PC-9 (cell line): ENCODE measurements at regions of chr6 and their contacts with region 1.

Region 1: DNA sequence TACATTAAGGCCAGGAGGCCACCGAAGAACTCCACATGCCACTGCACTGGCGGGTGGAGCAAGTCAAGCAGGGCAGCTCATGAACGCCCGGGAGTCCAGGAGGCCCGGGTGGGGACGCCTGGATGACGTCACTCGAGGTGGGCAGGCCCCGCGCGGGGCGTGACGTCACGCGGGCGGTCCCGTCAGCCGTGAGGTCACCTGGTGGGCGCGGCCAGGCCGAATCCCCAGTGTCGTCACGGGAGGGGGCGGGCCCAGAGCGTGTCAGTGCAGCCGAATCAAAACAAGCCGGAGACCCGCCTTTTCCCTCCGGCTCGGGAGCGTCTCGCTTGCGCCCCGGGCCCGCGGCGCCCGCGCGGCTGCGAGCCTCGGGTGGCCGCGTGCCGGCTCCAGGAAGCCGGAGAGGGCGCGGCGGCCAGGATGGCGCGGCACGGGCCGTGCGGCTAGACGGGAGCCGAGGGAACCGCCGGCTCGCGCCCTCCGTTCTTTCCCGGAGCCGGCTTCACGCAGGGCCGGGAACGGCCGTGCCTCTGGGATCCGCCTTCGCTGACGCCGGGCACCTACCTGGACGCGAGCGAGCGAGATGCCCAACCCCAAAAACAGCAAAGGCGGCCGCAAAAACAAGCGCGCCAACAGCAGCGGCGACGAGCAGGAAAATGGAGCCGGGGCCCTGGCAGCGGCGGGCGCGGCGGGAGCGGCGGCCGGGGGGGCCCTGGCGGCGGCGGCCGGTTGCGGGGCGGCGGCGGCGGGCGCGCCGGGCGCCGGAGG is at the start of gene HECA:
- DNase-seq: peak; percentile 87 to 93
- H3K4me3 ChIP-seq: peak within 1 kb of the TSS; percentile 76
- H3K27ac ChIP-seq: no peak within 1 kb of the TSS
- H3K4me1 ChIP-seq: peaks cover 11% of the 10 kb centered on the region
- H3K27me3 ChIP-seq: no peaks in the 10 kb centered on the region
- CTCF ChIP-seq: no peak
- total RNA-seq, gene HECA: 11.6 and 12.9 TPM in 2 replicates

Region 2: DNA sequence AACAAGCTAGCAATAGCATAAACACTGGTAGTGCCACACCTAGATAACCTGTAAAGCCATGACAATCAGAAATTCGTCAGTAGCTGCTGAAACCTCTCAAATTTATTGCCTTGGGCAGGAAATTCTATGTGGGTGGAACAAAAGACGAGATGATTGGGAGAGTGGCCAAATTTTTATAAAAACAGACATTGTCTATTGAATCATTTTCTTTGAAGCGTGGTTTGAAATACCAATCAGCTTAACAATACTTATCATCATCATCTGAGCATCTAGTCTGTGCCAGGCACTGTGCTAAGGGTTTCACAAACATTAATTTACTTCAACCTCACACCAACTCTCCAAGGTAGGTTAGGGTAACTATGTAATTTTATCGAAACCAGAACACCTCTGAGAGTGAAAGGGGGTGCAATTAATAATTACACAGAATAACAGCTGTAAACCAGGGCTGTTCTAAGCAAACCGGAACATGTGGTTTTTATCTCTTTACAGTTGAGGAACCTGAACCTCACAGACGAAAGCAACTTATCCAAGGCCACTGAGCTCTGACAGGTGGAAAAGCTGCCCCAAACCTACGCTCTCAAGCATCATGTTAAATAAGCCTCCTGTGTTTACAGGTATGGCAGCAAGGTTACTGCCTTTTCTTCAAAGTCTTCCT is 679.1 kb before region 1 on chr6:
- CTCF ChIA-PET with region 1: interaction called, 22 read pairs
- POLR2A ChIA-PET with region 1: no interaction called
- intact Hi-C with region 1: no loop called
- DNase-seq: peak; percentile 17 to 82
- H3K4me3 ChIP-seq: peak overlapping the region; percentile 9; the same call in 1 of the 2 replicates
- H3K27ac ChIP-seq: peak overlapping the region; percentile 52
- H3K4me1 ChIP-seq: peaks cover 22% of the 10 kb centered on the region
- H3K27me3 ChIP-seq: no peaks in the 10 kb centered on the region
- CTCF ChIP-seq: no peak

Region 3: DNA sequence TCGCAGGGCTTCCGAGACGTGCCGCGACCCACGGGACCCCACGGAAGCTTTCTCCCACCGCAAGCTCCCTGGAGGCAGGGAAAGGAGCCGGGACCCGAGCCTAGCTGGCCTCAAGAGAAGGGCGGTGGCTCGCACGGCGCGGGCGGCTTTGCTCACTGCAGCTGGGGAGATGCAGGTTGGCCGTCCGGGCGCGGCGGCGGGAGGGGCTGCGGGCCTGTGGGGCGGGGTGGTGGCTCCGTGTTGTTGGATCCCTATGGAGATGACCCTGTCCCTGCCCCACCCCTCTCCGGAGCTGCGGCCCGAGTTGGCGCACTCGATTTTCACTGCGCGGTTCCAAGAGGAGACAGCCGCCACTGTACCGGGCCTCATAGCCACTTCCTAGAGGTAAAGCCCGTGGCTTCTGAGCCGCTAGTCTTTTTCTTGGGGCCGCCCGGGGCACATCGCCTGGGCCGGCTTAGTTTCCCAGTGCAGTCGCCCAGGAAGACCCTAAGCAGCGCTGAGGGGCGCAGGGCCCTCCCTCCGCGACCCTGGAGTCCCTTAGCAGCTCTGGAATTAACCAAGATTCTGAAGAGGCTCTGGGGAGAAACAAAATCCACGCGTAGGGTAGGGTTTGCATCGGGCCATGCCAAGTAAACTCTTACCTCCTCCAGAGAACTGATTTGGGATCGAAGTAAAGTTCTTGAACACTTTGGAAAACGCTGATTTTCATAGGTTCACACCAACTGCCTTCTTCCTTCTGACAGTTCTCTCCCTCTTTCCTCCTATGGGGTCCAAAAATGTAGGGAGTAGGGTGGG is 339.0 kb before region 1 on chr6 and contains the start of gene ECT2L:
- CTCF ChIA-PET with region 1: no interaction called
- POLR2A ChIA-PET with region 1: no interaction called
- intact Hi-C with region 1: no loop called
- DNase-seq: peak in 1 of 2 experiments; percentile 61
- H3K4me3 ChIP-seq: no peak within 1 kb of the TSS
- H3K27ac ChIP-seq: no peak within 1 kb of the TSS
- H3K4me1 ChIP-seq: no peaks in the 10 kb centered on the region
- H3K27me3 ChIP-seq: no peaks in the 10 kb centered on the region
- CTCF ChIP-seq: no peak
- total RNA-seq, gene ECT2L: not detected in 2 replicates

Region 4: DNA sequence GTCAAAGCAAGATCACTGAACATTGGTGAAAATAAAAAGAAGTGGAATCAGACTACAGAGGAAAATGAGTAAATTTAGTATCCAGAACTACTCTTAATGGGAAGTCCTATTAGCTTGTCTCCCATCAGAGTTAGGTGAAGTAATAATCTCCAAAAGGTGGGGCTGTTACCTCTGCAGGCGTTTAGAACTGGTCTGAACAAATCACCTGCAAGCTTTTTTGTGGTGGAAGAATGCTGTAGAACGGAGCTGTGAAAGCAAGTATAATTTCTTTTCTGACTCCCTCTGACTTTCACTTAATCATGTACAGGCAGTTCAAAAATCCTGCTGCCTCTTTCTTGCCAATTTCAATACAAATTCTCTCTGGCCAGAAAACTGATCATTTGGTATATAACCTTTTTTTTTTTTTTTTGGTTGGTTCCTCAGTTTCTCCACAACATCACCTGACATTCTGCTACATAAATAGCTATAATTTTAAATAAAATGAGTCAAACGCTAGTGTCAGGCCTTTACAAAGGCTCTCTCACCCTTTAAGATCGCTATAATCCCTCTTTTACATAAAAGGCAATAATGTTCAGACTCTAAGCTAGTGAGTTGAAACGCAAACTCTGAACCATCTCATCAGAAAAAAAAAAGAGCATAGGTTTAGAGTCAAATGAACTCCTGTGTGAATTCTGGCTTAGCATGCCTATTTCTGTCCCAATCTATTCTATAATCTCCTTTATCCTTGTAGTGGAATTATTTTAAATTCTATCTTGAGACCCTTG is 200.6 kb after region 1 on chr6:
- CTCF ChIA-PET with region 1: interaction called, 10 read pairs
- POLR2A ChIA-PET with region 1: no interaction called
- intact Hi-C with region 1: no loop called
- DNase-seq: no peak
- H3K4me3 ChIP-seq: no peak overlapping the region
- H3K27ac ChIP-seq: no peak overlapping the region
- H3K4me1 ChIP-seq: no peaks in the 10 kb centered on the region
- H3K27me3 ChIP-seq: no peaks in the 10 kb centered on the region
- CTCF ChIP-seq: no peak